H1 (cell line): ENCODE measurements at regions of chr11 and their contacts with region 1.

Region 1: GRCh38 chr11:73288873-73289707 is 17.0 kb downstream of the P2RY6 start:
- DNase-seq: peak in 1 of 2 experiments; percentile 93
- H3K4me3 ChIP-seq: no peak overlapping the region
- H3K27ac ChIP-seq: no peak overlapping the region
- H3K4me1 ChIP-seq: peaks cover 0 to 8% (median 1%) of the 10 kb centered on the region in 4 experiments; a peak in 5 of 7 replicates
- H3K27me3 ChIP-seq: peaks cover 0 to 10% (median 3%) of the 10 kb centered on the region in 4 experiments; a peak in 5 of 7 replicates
- CTCF ChIP-seq: peak; percentile 97 to 98 (median 97)
- EP300 ChIP-seq: no peak
- POLR2A ChIP-seq: no peak
- RAD21 ChIP-seq: peak; percentile 98 to 99

Region 2: DNA sequence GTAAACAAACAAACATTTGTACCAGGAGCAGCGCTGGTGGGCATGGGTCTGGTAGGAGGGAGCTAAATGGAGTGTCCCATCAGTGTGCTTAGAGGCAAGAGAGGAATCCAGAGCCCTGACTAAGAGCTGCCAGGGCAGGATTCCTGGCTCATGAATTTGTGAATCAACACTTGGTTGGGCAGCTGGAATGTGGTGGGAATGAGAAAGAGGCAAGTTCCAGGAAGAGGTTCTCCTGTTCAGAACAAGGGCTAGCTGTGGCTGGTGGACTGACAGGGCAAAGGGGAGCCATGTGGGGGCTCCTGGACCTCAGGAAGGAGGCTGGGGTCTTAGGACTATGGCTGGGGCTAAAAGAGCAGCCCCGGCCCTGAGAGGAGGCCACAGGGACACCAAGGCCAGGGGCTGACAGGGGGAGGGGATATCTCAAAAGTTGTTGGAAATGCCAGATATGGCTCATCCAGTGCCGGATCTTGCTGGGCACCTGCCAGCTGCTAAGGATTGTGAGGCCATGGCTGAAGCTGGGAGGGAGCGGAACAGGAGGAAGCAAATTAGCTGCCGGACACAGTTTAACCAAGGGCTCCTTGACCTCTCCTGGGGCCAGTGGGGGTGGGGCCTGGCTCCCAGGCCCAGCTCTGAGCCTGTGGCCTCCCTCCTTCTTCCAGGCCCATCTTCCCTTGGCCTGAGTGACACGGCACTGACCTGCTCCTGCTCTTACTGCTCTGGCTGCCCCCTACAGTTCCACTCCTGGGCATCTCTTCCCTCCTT is 31.6 kb before region 1 on chr11:
- CTCF ChIA-PET with region 1: interaction called, 81 read pairs
- POLR2A ChIA-PET with region 1: no interaction called
- DNase-seq: no peak
- H3K4me3 ChIP-seq: no peak overlapping the region
- H3K27ac ChIP-seq: no peak overlapping the region
- H3K4me1 ChIP-seq: peaks cover 0 to 3% (median 1%) of the 10 kb centered on the region in 4 experiments; a peak in 1 of 7 replicates
- H3K27me3 ChIP-seq: peaks cover 0 to 2% (median 0%) of the 10 kb centered on the region in 4 experiments; a peak in 1 of 7 replicates
- CTCF ChIP-seq: no peak
- EP300 ChIP-seq: no peak
- POLR2A ChIP-seq: no peak
- RAD21 ChIP-seq: no peak

Region 3: DNA sequence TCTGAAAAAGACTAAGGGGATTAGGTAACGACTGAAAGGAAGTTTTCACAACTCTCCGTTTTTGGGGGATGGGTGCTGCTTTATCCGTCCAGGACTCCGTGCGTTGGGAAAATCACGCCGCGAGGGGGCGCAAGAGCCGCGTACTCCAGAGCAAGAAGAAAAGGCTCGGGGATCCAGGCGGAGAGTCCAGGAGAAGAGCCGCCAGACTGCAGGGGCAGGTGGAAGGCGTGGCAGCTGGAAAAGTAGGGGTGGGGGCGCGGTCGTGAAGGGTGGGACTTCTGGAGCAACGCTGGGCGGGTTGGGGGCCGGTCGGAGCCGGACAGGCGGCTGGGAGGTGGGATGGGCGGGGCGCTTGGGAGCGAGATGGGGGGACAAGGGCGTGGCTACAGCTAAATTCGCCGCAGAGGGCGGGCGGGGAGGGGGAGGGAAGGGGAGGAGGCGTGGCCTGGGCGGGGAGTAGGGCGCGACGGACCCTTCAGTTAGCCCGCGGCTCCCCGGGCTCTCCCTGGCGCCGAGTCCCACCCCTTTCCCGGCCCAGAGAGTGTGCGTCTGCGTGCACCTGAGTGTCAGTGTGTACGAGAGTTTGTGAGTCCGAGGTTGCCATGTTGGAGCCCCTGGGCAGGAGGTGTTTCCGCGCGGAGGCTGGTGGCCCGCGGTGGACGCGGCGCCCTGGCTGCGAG is 18.4 kb after region 1 on chr11:
- CTCF ChIA-PET with region 1: interaction called, 233 read pairs
- POLR2A ChIA-PET with region 1: no interaction called
- DNase-seq: peak; percentile 95 to 99
- H3K4me3 ChIP-seq: peak overlapping the region; percentile 57 to 88 (median 84)
- H3K27ac ChIP-seq: 0 out of 2 replicates have a peak overlapping the region, but pooled peaks have one; percentile 39
- H3K4me1 ChIP-seq: peaks cover 3 to 20% (median 7%) of the 10 kb centered on the region in 4 experiments; a peak in 6 of 7 replicates
- H3K27me3 ChIP-seq: peaks cover 0 to 39% (median 27%) of the 10 kb centered on the region in 4 experiments; a peak in 6 of 7 replicates
- CTCF ChIP-seq: peak in 2 of 3 experiments; percentile 78 to 89; a peak in 3 of 4 replicates
- EP300 ChIP-seq: 0 out of 3 replicates have a peak, but pooled peaks of 1 of the 2 experiments have one; percentile 47
- POLR2A ChIP-seq: no peak
- RAD21 ChIP-seq: peak; percentile 80 to 88

Region 4: GRCh38 chr11:73342633-73343032 is 53.5 kb after region 1 on chr11:
- CTCF ChIA-PET with region 1: interaction called, 113 read pairs
- POLR2A ChIA-PET with region 1: no interaction called
- DNase-seq: no peak
- H3K4me3 ChIP-seq: peak overlapping the region; percentile 29 to 55 (median 34); a peak in 7 of 8 replicates
- H3K27ac ChIP-seq: no peak overlapping the region
- H3K4me1 ChIP-seq: peaks cover 0 to 11% (median 9%) of the 10 kb centered on the region in 4 experiments; a peak in 6 of 7 replicates
- H3K27me3 ChIP-seq: peaks cover 7 to 44% (median 30%) of the 10 kb centered on the region in 4 experiments; a peak in 6 of 7 replicates
- CTCF ChIP-seq: peak in 2 of 3 experiments; percentile 17 to 37; a peak in 3 of 4 replicates
- EP300 ChIP-seq: no peak
- POLR2A ChIP-seq: no peak
- RAD21 ChIP-seq: no peak

Region 5: DNA sequence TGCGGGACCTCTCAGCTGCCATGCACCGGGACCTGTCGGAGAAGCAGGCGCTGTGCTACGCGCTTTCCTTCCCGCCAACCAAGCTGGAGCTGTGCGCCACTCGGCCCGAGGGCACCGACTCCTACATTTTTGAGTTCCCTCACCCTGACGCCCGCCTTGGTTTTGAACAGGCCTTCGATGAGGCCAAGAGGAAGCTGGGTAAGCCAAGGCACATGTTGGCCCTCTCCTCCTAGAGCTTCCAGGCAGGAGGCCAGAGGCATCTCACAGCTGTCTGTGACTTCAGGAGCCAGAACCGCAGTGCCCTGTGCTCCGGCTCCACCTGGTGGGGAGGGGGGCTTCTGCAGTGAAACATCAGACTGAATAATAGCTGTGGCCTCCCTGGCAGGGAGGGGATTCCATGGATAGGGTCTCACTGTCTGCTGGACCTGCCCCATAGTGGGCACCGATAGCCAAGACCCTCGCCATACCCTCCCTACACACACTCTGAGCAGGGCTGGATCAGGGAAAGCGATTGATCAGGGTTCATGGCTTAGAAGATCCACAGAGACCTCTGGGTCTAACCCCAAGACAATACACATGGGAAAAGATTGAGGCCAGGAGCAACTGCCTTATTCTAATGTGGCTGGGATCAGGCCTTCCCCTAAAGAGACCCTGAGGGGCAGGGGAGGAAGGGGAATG is 71.4 kb after region 1 on chr11:
- CTCF ChIA-PET with region 1: interaction called, 16 read pairs
- POLR2A ChIA-PET with region 1: no interaction called
- DNase-seq: peak in 1 of 2 experiments; percentile 83
- H3K4me3 ChIP-seq: no peak overlapping the region
- H3K27ac ChIP-seq: no peak overlapping the region
- H3K4me1 ChIP-seq: peaks cover 0 to 3% (median under 1%) of the 10 kb centered on the region in 4 experiments; a peak in 3 of 7 replicates
- H3K27me3 ChIP-seq: peaks cover 0 to 4% (median 2%) of the 10 kb centered on the region in 4 experiments; a peak in 4 of 7 replicates
- CTCF ChIP-seq: peak; percentile 79 to 86 (median 84)
- EP300 ChIP-seq: no peak
- POLR2A ChIP-seq: no peak
- RAD21 ChIP-seq: peak; percentile 70 to 80

Region 6: DNA sequence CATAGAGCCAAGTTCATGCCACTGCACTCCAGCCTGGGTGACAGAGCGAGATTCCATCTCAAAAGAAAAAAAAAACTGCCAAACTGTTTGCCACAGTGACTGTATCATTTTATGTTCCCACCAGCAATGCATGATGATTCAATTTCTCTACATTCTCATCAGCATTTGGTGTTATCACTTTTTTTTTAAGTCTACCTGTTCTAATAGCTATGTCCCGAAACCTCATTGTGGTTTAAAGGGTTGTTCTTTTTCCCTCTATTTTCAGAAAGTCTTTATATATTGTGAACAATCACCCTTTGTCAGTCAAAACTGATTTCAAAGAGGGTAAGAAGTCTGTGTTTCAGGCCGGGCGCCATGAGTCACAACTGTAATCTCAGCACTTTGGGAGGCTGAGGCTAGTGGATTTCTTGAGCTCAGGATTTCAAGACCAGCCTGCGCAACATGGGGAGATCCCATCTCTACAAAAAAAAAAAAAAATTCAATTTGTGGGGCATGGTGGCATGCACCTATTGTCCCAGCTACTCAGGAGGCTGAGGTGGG is 323.6 kb after region 1 on chr11:
- CTCF ChIA-PET with region 1: no interaction called
- POLR2A ChIA-PET with region 1: no interaction called
- DNase-seq: no peak
- H3K4me3 ChIP-seq: no peak overlapping the region
- H3K27ac ChIP-seq: no peak overlapping the region
- H3K4me1 ChIP-seq: no peaks in the 10 kb centered on the region
- H3K27me3 ChIP-seq: no peaks in the 10 kb centered on the region
- CTCF ChIP-seq: no peak
- EP300 ChIP-seq: no peak
- POLR2A ChIP-seq: no peak
- RAD21 ChIP-seq: no peak